Transverse colon (tissue), 4 donors: ENCODE measurements at regions of chr19 and their contacts with region 1.

Region 1: DNA sequence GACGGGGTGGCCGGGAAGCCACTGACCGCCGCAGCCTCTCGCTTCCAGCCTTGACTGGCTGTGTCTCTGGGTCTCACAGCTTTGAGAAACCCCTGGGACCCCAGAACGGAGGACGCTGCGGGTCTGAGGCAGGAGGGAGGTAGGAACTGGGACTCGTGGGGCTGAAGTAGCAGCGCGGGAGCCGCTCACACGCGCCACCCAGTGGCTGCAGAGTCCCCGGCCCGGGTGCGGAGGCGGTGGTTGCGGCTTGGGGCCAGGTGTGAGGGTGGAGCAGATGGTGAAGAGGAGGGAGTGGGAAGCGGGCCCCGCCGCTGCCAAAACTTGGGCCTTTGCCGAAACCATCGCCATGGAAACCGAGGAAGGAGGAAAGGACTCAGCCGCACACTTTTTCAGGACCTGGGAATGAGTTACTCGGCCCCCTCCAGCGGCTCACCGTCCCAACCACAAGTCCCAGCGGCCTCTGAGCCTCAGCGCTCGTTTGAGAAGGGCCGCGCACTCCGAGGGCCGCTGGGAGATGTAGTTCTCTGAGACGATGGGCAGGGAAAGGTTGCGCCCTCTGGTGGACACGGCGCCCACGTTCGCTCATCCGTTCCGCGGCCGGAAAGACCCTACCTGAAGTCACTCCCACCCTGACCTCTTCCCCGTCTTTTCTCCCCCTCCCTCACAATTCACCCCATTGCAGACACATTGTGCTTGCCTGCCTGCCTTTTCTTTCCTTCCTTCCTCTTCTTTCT is 2.2 kb upstream of the SLC17A7 start:
- DNase-seq: peak; percentile 95
- H3K4me3 ChIP-seq: peak overlapping the region; percentile 51 to 64 (median 54)
- H3K27ac ChIP-seq: peak overlapping the region; percentile 76 to 84 (median 82)
- H3K4me1 ChIP-seq: peaks cover 0 to 32% (median 4%) of the 10 kb centered on the region in 4 donors
- H3K27me3 ChIP-seq: peaks cover 43% of the 10 kb centered on the region
- CTCF ChIP-seq: peak; percentile 74 to 96 (median 82)
- EP300 ChIP-seq: no peak
- POLR2A ChIP-seq: peak; percentile 15

Region 2: GRCh38 chr19:48705431-48705830 is 738.1 kb before region 1 on chr19:
- in situ Hi-C with region 1: no loop called
- intact Hi-C with region 1: no loop called
- DNase-seq: no peak
- H3K4me3 ChIP-seq: no peak overlapping the region
- H3K27ac ChIP-seq: no peak overlapping the region
- H3K4me1 ChIP-seq: no peaks in the 10 kb centered on the region
- H3K27me3 ChIP-seq: no peaks in the 10 kb centered on the region
- CTCF ChIP-seq: no peak
- EP300 ChIP-seq: no peak
- POLR2A ChIP-seq: no peak

Region 3: DNA sequence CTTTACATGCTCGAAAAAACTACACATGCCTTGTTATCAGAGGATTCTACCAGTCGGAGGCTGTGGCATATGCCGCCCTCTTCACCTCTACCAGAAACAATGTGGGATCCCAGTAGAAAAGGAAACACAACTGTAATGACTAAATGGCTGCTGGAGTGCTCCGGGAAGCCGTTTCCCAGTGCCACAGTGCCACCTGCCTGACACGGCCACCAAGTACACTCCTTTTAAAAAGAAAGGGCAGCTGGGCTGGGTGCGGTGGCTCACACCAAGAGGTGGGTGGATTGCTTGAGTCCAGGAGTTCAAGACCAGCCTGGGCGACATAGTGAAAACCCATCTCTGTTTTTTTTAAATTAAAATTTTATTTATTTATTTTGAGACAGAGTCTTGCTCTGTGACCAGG is 218.7 kb before region 1 on chr19:
- in situ Hi-C with region 1: no loop called
- intact Hi-C with region 1: loop called (anchors 10 kb)
- DNase-seq: peak; percentile 77
- H3K4me3 ChIP-seq: no peak overlapping the region
- H3K27ac ChIP-seq: no peak overlapping the region
- H3K4me1 ChIP-seq: peaks cover 0 to 8% (median 1%) of the 10 kb centered on the region in 4 donors
- H3K27me3 ChIP-seq: no peaks in the 10 kb centered on the region
- CTCF ChIP-seq: peak; percentile 26 to 62 (median 52)
- EP300 ChIP-seq: no peak
- POLR2A ChIP-seq: no peak

Region 4: GRCh38 chr19:49366110-49366509 is 77.4 kb before region 1 on chr19:
- in situ Hi-C with region 1: no loop called
- intact Hi-C with region 1: loop called (anchors 2 kb)
- DNase-seq: no peak
- H3K4me3 ChIP-seq: no peak overlapping the region
- H3K27ac ChIP-seq: no peak overlapping the region
- H3K4me1 ChIP-seq: peaks cover 4 to 32% (median 18%) of the 10 kb centered on the region in 4 donors
- H3K27me3 ChIP-seq: no peaks in the 10 kb centered on the region
- CTCF ChIP-seq: no peak
- EP300 ChIP-seq: no peak
- POLR2A ChIP-seq: no peak

Region 5: GRCh38 chr19:49391581-49392399 is 51.7 kb before region 1 on chr19:
- in situ Hi-C with region 1: loop called in 3 of 4 experiments (anchors 5 to 10 kb)
- intact Hi-C with region 1: loop called (anchors 5 kb)
- DNase-seq: peak; percentile 84
- H3K4me3 ChIP-seq: no peak overlapping the region
- H3K27ac ChIP-seq: no peak overlapping the region
- H3K4me1 ChIP-seq: peaks cover 0 to 3% (median 0%) of the 10 kb centered on the region in 4 donors
- H3K27me3 ChIP-seq: peaks cover 8% of the 10 kb centered on the region
- CTCF ChIP-seq: peak; percentile 73 to 92 (median 79)
- EP300 ChIP-seq: no peak
- POLR2A ChIP-seq: no peak

Region 6: GRCh38 chr19:49497047-49497788 is 53.7 kb after region 1 on chr19:
- in situ Hi-C with region 1: no loop called
- intact Hi-C with region 1: no loop called
- DNase-seq: peak; percentile 86
- H3K4me3 ChIP-seq: peak overlapping the region; percentile 88 to 97 (median 91)
- H3K27ac ChIP-seq: peak overlapping the region; percentile 95 to 99 (median 96)
- H3K4me1 ChIP-seq: peaks cover 18 to 43% (median 32%) of the 10 kb centered on the region in 4 donors
- H3K27me3 ChIP-seq: no peaks in the 10 kb centered on the region
- CTCF ChIP-seq: no peak
- EP300 ChIP-seq: no peak
- POLR2A ChIP-seq: peak; percentile 38

Region 7: GRCh38 chr19:49624967-49625910 is 181.7 kb after region 1 on chr19:
- in situ Hi-C with region 1: no loop called
- intact Hi-C with region 1: no loop called
- DNase-seq: no peak
- H3K4me3 ChIP-seq: no peak overlapping the region
- H3K27ac ChIP-seq: no peak overlapping the region
- H3K4me1 ChIP-seq: no peaks in the 10 kb centered on the region
- H3K27me3 ChIP-seq: no peaks in the 10 kb centered on the region
- CTCF ChIP-seq: no peak
- EP300 ChIP-seq: no peak
- POLR2A ChIP-seq: no peak